Heart right ventricle (tissue), 16 donors: ENCODE measurements at regions of chr12 and their contacts with region 1.

Region 1: DNA sequence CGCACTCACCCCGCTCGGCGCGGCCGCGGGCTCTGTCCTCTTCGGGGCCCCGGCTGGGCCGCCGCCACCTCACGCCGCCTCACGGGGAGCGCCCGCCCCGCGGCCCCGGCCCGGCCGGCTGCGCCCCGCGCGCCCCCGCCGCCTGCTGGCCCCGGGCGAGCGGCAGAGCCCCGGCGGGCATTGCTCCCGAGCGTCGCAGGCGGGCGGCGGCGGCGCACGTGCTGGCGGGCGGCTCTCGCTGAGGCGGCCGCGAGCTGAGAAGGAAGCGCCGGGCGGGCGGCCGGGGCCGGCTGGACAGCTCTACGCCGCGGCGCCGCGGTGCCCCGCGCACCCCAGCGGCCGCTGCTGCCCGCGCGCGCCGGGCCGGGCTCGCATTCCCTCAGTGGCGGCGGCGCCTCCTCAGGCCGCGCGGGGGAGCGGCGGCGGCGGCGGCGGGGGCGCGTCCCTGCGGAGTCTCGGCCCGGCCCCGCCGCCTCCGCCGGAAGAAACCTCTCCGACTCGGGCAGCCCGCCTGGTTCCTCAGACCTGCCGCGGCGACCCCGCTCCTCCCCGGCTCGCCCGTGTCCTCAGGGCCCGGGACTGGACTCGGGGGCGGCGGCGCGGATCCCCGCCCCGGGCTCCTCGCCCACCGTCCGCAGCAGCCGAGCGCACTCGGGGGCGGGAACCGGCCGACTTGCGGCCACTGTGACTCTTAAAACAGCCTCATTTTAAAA is at the start of gene PITPNM2:
- DNase-seq: peak; percentile 50 to 74
- ATAC-seq: peak; percentile 69 to 89 (median 78)
- H3K4me3 ChIP-seq: peak within 1 kb of the TSS; percentile 66 to 91 (median 82)
- H3K27ac ChIP-seq: peak within 1 kb of the TSS; percentile 40 to 92 (median 86)
- H3K4me1 ChIP-seq: peaks cover 7 to 33% (median 27%) of the 10 kb centered on the region in 9 donors
- H3K27me3 ChIP-seq: peaks cover 0 to 12% (median 0%) of the 10 kb centered on the region in 7 donors
- CTCF ChIP-seq: peak in 6 of 9 donors; percentile 9 to 48 (median 29)
- total RNA-seq, gene PITPNM2: 13.3 to 32.7 (median 18.7) TPM

Region 2: DNA sequence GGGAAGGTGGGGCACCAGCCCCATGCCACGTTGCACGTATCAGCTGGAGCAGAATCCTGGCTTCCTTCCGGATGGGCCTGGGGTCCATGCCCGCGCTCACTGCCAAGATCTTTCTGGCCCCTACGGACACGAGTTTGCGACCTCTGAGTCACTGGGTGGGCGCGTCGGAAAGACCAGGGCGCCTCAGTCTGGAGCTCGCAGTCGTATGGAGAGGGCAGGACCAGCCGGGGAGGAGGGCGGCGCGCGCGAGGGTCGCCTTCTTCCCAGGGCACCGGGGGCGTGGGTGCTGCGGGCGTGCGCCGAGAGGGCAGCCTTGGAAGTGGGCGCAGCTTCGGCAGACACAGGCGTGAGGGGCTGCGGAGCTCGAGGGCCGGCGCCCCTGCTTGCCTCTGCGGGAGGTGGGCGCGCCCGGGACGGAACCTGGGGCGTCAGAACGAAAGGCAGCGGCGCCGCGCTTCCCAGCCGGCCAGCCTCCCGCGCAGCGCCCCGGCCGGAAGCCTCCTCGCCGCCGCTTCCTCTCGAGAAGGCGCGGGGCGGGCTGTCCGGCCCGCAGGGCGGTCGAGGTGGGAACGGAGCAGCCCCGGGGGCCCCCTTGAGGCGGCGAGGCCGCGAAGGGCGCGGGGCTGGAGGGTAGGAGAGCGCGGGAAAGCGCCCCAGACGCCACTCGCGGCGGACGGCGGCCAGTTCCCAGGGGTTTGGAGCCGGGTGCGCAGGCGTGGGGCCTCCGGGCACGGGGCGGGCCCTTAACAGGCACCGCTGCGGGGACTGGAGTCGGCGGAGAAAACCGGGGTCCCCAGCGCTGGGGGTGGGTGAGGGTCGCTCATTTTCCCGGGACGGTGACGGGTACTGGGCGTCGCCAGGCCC is 170.5 kb before region 1 on chr12 and contains the start of gene ARL6IP4:
- intact Hi-C with region 1: loop called in 8 of 10 experiments (anchors 2 to 10 kb)
- DNase-seq: peak; percentile 53 to 72
- ATAC-seq: peak; percentile 64 to 86 (median 74)
- H3K4me3 ChIP-seq: peak within 1 kb of the TSS; percentile 76 to 100 (median 92)
- H3K27ac ChIP-seq: peak within 1 kb of the TSS; percentile 82 to 98 (median 92)
- H3K4me1 ChIP-seq: peaks cover 36 to 87% (median 72%) of the 10 kb centered on the region in 9 donors
- H3K27me3 ChIP-seq: no peaks in the 10 kb centered on the region
- CTCF ChIP-seq: peak in 1 of 9 donors; percentile 26
- total RNA-seq, gene ARL6IP4: 125 to 161 (median 137) TPM

Region 3: GRCh38 chr12:123021688-123022604 is 129.0 kb before region 1 on chr12:
- intact Hi-C with region 1: no loop called
- DNase-seq: no peak
- ATAC-seq: peak in 1 of 8 donors; percentile 14
- H3K4me3 ChIP-seq: no peak overlapping the region
- H3K27ac ChIP-seq: no peak overlapping the region
- H3K4me1 ChIP-seq: peaks cover 0 to 12% (median 0%) of the 10 kb centered on the region in 9 donors
- H3K27me3 ChIP-seq: no peaks in the 10 kb centered on the region
- CTCF ChIP-seq: no peak

Region 4: DNA sequence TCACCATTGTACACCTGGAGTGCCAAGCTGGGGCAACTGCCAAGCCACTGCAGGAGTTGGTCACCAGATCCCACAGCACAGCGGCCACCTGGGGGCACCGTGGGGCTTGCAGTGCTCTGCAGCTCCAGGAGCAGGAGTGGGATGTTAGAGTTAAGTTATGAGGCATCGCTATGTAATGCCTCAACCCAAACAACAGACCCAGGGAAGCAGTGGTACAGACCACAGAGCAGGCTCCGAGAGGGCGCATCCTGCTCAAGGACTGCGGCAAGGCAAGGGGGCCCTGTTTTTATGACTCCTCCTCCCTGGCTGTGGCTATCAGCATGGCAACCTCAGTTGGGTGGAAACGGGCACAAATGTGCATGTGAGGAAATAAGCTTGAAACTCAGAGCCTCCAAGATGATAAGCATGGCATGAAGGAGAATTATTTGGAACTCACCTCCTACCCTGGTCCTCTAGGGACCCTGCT is 107.3 kb before region 1 on chr12:
- intact Hi-C with region 1: loop called (anchors 1 to 5 kb)
- DNase-seq: peak; percentile 82 to 85
- ATAC-seq: peak; percentile 84 to 96 (median 91)
- H3K4me3 ChIP-seq: no peak overlapping the region
- H3K27ac ChIP-seq: peak overlapping the region in 7 of 10 donors; percentile 4 to 51 (median 39)
- H3K4me1 ChIP-seq: peaks cover 14 to 61% (median 42%) of the 10 kb centered on the region in 9 donors
- H3K27me3 ChIP-seq: no peaks in the 10 kb centered on the region
- CTCF ChIP-seq: peak; percentile 52 to 88 (median 72)

Region 5: DNA sequence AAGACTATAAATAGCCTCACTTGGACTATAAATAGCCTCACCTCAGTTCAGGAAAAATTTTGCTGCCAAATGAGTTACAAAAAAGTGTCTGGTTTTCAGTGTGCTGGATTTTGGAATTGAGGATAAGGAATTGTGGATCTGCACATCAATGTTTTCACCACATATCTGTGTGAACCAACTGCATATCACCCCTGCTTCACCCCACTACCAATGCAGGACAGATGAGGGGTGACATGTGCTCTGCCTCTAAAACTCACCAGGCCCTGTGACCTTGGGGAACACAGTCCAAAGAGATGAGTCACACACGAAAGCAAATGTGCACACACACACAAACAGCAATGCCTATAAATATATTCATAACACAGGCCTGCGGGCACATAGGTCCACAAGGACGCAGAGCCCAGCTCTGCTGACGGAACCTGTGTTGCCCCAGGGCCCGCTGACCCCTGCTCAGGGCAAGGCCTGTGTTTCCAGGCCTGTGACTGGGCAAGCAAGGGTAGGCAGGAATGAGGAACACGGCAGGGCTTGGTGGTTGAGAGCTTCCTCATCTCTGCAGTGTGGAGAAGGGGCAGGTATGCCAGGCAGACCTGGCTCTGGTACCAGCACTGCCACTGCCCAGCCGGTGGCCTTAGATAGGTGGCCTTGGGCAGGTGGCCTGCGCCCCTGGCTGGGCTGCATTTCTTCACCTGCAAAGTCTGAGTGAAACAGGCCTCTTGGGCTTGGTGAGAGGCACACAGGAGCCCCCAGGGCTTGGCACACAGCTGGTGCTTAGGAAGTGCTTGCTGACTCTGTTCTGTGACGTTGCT is 88.0 kb before region 1 on chr12:
- intact Hi-C with region 1: loop called in 3 of 10 experiments (anchors 5 to 10 kb)
- DNase-seq: peak; percentile 55 to 56
- ATAC-seq: peak; percentile 43 to 81 (median 70)
- H3K4me3 ChIP-seq: no peak overlapping the region
- H3K27ac ChIP-seq: peak overlapping the region; percentile 84 to 97 (median 91)
- H3K4me1 ChIP-seq: peaks cover 57 to 97% (median 91%) of the 10 kb centered on the region in 9 donors
- H3K27me3 ChIP-seq: no peaks in the 10 kb centered on the region
- CTCF ChIP-seq: no peak

Region 6: DNA sequence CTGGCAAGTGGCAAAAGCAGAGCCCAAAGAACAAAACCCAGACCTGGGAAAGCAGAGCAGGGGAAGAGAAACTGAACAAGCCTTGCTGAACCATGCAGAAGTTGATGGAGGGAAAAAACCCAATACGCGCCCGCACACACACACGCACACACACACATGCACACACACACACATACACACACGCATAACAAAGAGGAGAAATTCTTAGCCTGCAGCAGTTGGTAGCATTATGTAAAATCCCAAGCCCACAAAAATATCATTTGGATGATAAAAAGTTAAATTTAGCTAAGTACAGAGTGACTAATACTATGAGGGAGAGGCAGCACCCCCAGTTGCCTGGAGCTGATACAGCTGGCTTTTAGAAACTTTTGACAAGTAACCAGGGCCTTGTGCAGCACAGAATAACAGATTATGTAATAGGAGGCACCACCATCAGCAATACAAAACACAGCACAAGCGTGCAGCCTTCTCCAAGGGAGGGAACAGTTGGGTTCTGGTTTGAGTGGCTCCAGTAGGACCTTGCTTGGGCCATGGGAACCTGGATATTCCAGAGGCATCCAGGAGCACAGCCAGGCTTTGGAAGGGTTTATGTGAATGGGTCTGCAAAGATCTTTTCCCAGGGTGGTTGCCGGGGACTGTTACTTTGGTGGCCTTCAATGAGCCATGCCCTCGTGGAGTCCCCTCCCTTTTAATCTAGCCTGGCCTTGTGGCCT is 35.3 kb before region 1 on chr12:
- intact Hi-C with region 1: loop called in 2 of 10 experiments (anchors 2 kb)
- DNase-seq: peak in 1 of 2 donors; percentile 78
- ATAC-seq: peak; percentile 85 to 95 (median 92)
- H3K4me3 ChIP-seq: no peak overlapping the region
- H3K27ac ChIP-seq: peak overlapping the region; percentile 59 to 85 (median 68)
- H3K4me1 ChIP-seq: peaks cover 24 to 84% (median 65%) of the 10 kb centered on the region in 9 donors
- H3K27me3 ChIP-seq: no peaks in the 10 kb centered on the region
- CTCF ChIP-seq: no peak

Region 7: DNA sequence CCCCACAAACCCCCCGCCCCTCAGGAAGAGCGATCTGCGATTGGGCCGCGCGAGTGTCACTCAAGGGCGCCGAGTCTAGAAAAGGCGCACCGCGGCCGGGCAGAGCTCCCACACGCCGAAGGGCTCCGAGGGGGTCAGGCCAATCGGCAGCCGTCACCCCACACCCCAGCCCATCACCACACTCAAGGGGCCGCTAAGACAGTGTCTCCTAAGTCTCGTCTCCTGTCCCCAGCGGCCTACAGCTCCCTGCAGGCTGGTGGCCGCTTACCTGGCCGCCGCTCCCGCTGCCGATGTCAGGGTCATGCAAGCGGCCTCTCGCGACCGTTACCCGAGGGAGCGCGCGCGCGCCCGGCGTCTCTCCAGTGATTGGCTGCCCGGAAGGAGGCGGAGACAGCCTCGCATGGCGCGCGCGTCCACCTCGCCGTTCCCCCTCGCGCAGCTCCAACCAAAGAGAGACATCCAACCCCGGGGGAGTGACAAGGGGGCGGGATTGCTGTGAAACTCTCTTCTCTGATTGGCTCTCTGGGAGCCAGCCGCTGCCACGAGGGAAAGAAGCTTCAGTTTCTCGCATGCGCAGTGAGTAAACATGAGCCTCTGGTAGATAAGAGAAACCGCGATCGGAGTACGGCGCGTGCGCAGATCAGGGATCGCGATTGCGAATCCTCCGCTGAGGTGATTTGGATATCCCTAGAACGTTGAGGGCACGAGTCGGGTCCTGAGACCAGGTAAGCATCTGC is 82.1 kb after region 1 on chr12 and contains the starts of genes MPHOSPH9 and MTRFR:
- intact Hi-C with region 1: loop called in 1 of 10 experiments (anchors 5 kb)
- DNase-seq: peak; percentile 98 to 100
- ATAC-seq: peak; percentile 99
- H3K4me3 ChIP-seq: peak within 1 kb of the TSS; percentile 79 to 97 (median 87)
- H3K27ac ChIP-seq: peak within 1 kb of the TSS; percentile 66 to 96 (median 90)
- H3K4me1 ChIP-seq: peaks cover 2 to 56% (median 34%) of the 10 kb centered on the region in 9 donors
- H3K27me3 ChIP-seq: no peaks in the 10 kb centered on the region
- CTCF ChIP-seq: no peak
- total RNA-seq, gene MPHOSPH9: 19.7 to 33.6 (median 27.1) TPM
- total RNA-seq, gene MTRFR: 9.5 to 12.1 (median 10.8) TPM